ENCODE measurements at regions of chr1 and their contacts with region 1.

Region 1: GRCh38 chr1:15071936-15072335 is 81.6 kb upstream of the TMEM51 start:
- DNase-seq: no peak
- ATAC-seq: no peak
- H3K4me3 ChIP-seq: no peak overlapping the region
- H3K27ac ChIP-seq: no peak overlapping the region
- H3K4me1 ChIP-seq: no peaks in the 10 kb centered on the region
- H3K27me3 ChIP-seq: no peaks in the 10 kb centered on the region
- CTCF ChIP-seq: no peak

Region 2: DNA sequence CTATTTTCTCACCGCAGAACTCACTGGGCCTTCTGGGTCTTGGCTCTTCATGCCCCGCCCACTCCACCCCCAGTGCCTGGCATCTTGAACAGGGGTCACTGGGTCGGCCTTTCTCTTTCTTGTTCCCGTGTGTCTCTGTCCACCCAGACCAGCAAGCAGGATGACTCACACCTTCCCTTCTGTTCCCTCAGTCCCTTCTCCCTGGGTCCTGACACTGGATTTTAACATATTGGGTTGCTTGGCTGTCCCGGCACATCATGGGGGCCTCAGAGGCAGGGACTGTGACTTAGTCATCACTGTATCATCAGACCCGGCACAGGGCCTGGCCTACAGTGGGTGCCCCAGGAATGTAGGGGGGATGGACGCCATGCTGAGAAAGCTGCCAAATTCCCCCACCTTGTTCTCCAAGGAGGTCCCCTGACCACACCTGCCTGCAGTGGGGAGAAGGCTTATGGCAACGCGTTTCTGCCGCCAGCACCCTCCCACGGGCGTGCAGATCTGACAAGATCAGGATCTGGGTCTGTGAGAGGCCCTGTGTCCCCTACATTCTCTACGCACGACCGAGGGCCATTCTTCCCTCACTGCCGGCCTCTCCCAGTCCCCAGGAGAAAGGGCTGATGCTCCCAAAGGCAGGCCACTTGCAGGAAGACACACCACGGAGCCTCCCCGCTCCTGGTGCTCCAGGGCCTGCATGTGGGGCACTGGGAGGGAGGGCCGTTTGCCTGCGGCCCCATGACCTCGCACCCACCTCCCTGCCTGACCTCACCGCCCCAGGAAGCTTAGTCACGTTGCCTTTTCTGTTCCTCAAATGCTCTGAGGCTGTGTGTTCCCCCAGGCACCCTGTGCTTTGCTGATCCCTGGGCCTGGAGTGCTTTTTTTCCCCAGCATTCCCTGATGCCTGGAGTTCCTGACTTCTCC is 75.5 kb before region 1 on chr1:
- intact Hi-C with region 1: no loop called
- DNase-seq: peak in 1 of 2 donors; percentile 48
- ATAC-seq: peak in 1 of 4 donors; percentile 43
- H3K4me3 ChIP-seq: no peak overlapping the region
- H3K27ac ChIP-seq: no peak overlapping the region
- H3K4me1 ChIP-seq: no peaks in the 10 kb centered on the region
- H3K27me3 ChIP-seq: peaks cover 0 to 9% (median 3%) of the 10 kb centered on the region in 3 donors
- CTCF ChIP-seq: no peak

Region 3: DNA sequence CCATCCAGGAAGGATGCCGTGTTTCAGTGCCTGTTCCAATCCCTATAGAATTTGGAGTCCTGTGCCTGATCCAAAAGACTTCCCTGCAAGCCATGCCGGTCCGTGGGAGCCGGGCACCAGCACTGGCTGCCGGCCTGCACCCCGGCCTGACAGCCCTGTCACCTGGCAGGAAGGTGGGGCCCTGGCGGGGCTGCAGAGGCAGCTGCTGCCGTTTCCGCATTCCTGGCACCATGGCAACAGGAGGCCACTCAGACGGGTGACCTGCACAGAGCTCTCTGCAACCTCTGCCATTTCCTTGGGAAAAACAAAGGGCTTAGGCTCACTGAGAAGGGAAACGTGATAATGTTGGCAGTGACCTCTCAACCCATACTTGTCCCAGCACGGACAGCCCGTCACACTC is 18.4 kb after region 1 on chr1:
- intact Hi-C with region 1: loop called in 1 of 2 experiments (anchors 1 kb)
- DNase-seq: no peak
- ATAC-seq: no peak
- H3K4me3 ChIP-seq: no peak overlapping the region
- H3K27ac ChIP-seq: no peak overlapping the region
- H3K4me1 ChIP-seq: no peaks in the 10 kb centered on the region
- H3K27me3 ChIP-seq: no peaks in the 10 kb centered on the region
- CTCF ChIP-seq: no peak

Measured in psoas muscle (tissue), 8 donors.